ENCODE measurements at regions of chrX and their contacts with region 1.

Region 1: DNA sequence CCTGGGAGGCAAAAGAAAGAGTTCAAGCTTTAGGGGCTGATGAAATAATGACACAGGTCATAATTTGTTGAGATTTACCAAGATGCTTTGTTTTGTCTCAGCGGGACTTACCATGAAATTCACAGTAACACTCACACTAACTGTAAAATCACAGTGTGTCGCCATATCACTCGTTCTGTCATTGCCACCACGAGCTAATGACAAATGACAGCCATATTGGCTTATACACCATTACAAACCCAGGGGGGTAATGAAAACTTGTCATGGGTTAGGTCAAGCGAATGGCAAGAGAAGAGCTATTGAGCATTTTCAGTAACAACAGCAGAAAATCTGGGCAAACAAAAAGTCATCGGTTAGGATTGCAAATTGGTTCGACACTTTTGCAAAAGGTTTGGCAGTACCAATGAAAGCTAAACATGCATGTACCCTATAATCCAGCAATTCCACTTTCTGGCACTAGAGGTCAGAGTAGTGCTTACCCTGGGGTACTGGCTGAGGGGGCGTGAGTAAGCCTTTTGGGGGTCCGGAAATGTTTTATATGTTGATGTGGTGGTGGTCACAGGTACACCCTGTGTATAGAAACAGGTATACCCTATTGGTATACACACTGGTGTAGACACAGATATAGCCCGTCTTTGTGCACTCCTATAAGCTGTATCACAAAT is 83.9 kb upstream of the RAI2 start:
- DNase-seq: peak; percentile 23
- H3K4me3 Mint-ChIP-seq: no peak overlapping the region
- H3K27ac Mint-ChIP-seq: no peak overlapping the region
- H3K4me1 Mint-ChIP-seq: no peaks in the 10 kb centered on the region
- H3K27me3 Mint-ChIP-seq: no peaks in the 10 kb centered on the region

Region 2: DNA sequence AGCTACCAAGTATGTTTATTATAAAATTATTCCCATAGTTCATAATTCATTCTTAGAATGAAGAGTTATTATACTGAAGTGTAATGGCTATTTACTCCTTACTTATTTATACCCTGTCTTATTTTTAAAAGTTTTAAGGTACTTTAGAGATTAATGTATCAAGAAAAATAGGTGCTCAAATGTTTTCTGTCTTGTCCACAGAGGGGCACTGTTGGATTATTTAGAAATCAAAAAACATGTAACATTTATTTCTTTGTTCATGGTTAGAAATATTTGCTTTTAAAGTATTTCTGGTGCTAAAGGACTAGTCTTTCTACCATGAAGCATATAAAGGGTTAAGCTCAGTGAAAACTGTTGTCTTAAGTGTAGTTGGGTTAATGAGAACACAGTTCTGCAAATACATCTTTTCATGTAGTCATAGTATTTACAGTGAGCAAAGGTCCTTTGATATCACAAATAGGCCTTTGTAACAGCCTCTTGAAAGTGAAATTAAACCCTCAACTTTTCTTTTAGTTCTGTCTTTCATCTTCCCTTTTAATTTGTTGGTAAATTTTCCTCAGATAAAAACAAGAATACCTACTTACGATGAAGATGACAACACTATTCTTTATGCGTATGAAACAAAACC is 200.0 kb before region 1 on chrX:
- CTCF ChIA-PET with region 1: no interaction called
- intact Hi-C with region 1: loop called (anchors 10 kb)
- DNase-seq: no peak
- H3K4me3 Mint-ChIP-seq: no peak overlapping the region
- H3K27ac Mint-ChIP-seq: no peak overlapping the region
- H3K4me1 Mint-ChIP-seq: peaks cover 35% of the 10 kb centered on the region
- H3K27me3 Mint-ChIP-seq: no peaks in the 10 kb centered on the region

Region 3: DNA sequence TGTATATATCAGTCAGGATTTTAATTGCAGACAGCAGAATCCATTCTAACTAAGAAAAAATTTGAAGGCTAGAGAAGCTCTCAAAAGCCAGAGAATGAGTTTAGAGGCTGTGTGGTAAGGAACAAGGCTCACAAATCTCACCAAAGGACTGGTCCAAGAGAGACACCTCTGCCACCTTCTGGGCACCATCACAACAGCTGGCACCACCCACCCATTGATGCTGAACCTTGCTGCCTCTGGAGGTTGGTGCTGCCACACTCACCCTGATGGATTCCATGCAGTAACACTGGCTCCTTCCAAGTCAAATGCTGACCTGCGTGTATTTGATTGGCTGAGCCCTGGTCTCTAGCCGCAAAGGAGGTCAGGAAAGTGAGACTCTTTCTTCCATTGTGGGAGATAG is 174.9 kb after region 1 on chrX:
- CTCF ChIA-PET with region 1: no interaction called
- intact Hi-C with region 1: loop called (anchors 10 kb)
- DNase-seq: peak; percentile 14
- H3K4me3 Mint-ChIP-seq: no peak overlapping the region
- H3K27ac Mint-ChIP-seq: no peak overlapping the region
- H3K4me1 Mint-ChIP-seq: no peaks in the 10 kb centered on the region
- H3K27me3 Mint-ChIP-seq: peaks cover 2% of the 10 kb centered on the region

Region 4: GRCh38 chrX:18210470-18210869 is 265.5 kb after region 1 on chrX:
- CTCF ChIA-PET with region 1: no interaction called
- intact Hi-C with region 1: loop called (anchors 2 kb)
- DNase-seq: no peak
- H3K4me3 Mint-ChIP-seq: no peak overlapping the region
- H3K27ac Mint-ChIP-seq: no peak overlapping the region
- H3K4me1 Mint-ChIP-seq: no peaks in the 10 kb centered on the region
- H3K27me3 Mint-ChIP-seq: no peaks in the 10 kb centered on the region